Dorsolateral prefrontal cortex (tissue), 120 donors: ENCODE measurements at regions of chr1 and their contacts with region 1.

Region 1: DNA sequence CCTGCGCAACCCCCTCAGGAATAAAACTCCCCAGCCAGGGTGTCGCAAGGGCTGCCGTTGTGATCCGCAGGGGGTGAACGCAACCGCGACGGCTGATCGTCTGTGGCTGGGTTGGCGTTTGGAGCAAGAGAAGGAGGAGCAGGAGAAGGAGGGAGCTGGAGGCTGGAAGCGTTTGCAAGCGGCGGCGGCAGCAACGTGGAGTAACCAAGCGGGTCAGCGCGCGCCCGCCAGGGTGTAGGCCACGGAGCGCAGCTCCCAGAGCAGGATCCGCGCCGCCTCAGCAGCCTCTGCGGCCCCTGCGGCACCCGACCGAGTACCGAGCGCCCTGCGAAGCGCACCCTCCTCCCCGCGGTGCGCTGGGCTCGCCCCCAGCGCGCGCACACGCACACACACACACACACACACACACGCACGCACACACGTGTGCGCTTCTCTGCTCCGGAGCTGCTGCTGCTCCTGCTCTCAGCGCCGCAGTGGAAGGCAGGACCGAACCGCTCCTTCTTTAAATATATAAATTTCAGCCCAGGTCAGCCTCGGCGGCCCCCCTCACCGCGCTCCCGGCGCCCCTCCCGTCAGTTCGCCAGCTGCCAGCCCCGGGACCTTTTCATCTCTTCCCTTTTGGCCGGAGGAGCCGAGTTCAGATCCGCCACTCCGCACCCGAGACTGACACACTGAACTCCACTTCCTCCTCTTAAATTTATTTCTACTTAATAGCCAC is 696 bp downstream of the TGFB2 start:
- DNase-seq: peak in 6 of 10 donors; percentile 32 to 75 (median 66)
- H3K4me3 ChIP-seq: peak overlapping the region; percentile 52 to 87 (median 71)
- H3K27ac ChIP-seq: peak overlapping the region in 58 of 59 donors; percentile 33 to 92 (median 84)
- H3K27me3 ChIP-seq: no peaks in the 10 kb centered on the region
- CTCF ChIP-seq: peak in 1 of 56 donors; percentile 9

Region 2: GRCh38 chr1:218521375-218522169 is 175.7 kb after region 1 on chr1:
- intact Hi-C with region 1: loop called in 1 of 2 experiments (anchors 5 kb)
- DNase-seq: peak in 1 of 10 donors; percentile 28
- H3K4me3 ChIP-seq: no peak overlapping the region
- H3K27ac ChIP-seq: no peak overlapping the region
- H3K27me3 ChIP-seq: peaks cover 0 to 19% (median 0%) of the 10 kb centered on the region in 45 donors
- CTCF ChIP-seq: peak; percentile 39 to 80 (median 66)

Region 3: DNA sequence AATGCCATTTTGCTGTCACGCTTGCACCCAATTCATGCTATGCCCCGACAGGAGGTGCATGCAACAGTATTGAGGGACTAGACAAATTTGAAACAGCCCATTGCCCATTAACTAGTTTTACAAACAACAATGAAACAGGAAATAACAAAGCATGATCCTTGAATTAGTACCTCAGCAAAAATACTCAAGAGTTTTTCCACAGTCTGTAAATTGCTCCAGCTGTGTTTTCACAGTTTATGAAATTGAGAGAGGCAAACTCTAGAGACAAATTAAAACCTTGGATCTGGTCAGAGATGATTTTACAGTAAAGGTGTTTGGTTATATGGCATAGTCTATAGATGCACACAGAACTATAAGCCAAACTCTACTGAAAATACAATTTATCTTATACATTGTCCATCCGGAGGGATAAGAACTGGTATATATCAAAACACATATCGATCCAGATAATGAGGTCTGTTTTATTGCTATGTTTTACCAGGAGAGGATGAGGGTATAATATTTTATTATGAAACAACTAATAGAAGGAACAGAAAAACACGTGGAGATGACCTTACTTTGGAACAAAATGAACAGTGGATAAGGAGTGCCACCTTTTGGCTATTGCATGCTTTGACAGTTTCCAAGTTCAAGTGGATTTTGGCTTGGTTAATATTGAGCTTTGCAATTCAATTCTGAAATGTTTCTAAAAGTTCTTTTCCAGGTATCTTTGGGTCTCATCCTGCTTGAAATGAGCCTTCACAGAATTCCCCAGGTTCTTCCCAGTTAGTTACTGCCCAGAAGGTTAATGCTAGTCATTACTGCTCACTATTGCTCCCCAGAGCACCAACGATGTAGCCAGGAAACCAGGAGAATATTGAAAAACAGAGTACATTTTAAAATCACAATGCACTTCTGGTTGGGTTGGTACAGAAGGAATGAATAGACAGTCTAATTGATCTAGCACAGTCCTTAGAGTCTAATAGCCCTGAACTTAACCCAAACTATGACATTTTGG is 1221.4 kb after region 1 on chr1:
- intact Hi-C with region 1: loop called in 1 of 2 experiments (anchors 5 kb)
- DNase-seq: no peak
- H3K4me3 ChIP-seq: no peak overlapping the region
- H3K27ac ChIP-seq: no peak overlapping the region
- H3K27me3 ChIP-seq: peaks cover 0 to 3% (median 0%) of the 10 kb centered on the region in 45 donors
- CTCF ChIP-seq: peak; percentile 14 to 77 (median 61)